ENCODE measurements at regions of chr10 and their contacts with region 1.

Region 1: DNA sequence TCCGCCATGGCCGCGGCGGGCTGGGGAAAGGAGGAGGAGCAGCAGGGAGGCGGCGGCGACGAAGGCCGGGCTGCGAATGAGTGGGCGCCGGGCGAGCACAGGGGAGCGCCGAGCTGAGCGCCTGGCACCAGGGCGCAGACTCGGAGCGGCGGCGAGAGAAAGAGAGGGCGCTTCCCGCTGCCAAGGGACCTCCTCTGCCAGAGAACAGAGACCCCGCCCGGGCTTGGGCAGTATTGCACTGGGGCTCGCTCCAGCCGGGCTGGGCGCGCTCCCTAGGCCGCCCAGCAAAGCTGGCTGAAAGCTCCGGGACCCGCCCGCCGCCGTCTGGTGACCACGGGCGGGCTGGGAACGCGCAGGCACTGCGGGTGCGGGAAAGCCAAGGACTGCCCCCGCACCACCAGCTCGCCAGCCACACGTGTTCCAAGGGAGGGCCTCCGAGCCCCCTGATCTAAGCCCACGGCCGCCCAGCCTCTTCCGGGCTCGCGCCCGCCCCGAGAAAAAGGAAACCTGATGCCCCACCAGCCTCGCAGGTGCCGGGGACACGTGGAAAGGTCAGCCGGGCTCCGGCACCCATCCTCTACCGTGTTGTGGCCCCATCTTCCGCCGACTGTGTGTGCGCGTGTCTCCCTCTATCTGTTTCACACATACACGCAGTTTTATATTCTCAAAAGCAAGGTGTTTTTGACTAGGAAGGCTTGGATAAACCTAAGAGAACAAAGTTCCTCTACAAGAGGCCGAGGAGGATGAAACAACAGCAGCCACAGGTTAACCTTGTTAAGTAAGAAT is at the start of gene CCDC6:
- DNase-seq: peak; percentile 90
- ATAC-seq: peak; percentile 92
- H3K4me3 ChIP-seq: peak within 1 kb of the TSS; percentile 84
- H3K27ac ChIP-seq: peak within 1 kb of the TSS; percentile 66
- H3K4me1 ChIP-seq: peaks cover 3% of the 10 kb centered on the region
- H3K27me3 ChIP-seq: no peaks in the 10 kb centered on the region
- CTCF ChIP-seq: peak; percentile 85
- POLR2A ChIP-seq: peak; percentile 57
- RAD21 ChIP-seq: peak; percentile 60
- total RNA-seq, gene CCDC6: 30.8 and 44.2 TPM in 2 replicates

Region 2: DNA sequence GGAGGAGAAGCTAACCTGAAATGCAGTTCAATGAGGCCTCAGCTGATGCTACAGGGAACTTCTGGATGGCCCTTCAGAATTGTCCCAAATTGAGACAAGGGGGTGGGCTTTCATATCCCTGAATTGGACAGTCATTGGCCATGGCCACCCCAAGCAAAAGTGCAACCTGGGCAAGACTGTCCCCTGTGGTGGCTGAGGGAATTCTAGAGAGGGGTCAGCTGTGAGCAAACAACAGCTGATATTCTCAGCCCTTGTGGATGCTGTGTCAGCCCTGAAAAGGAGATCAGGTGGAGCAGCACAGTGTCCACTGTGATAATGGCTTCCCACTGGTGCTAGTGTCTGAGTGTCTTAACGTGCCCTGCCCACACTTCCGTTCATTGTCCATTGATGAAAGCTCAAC is 273.5 kb before region 1 on chr10:
- CTCF ChIA-PET with region 1: no interaction called
- POLR2A ChIA-PET with region 1: no interaction called
- dilution Hi-C with region 1: no loop called
- in situ Hi-C with region 1: no loop called
- intact Hi-C with region 1: no loop called
- DNase-seq: no peak
- ATAC-seq: no peak
- H3K4me3 ChIP-seq: no peak overlapping the region
- H3K27ac ChIP-seq: no peak overlapping the region
- H3K4me1 ChIP-seq: no peaks in the 10 kb centered on the region
- H3K27me3 ChIP-seq: peaks cover 10% of the 10 kb centered on the region
- CTCF ChIP-seq: no peak
- POLR2A ChIP-seq: no peak
- RAD21 ChIP-seq: no peak

Region 3: GRCh38 chr10:59830601-59831259 is 75.9 kb before region 1 on chr10:
- CTCF ChIA-PET with region 1: interaction called, 6 read pairs
- POLR2A ChIA-PET with region 1: no interaction called
- dilution Hi-C with region 1: no loop called
- in situ Hi-C with region 1: no loop called
- intact Hi-C with region 1: loop called (anchors 2 kb)
- DNase-seq: peak; percentile 56
- ATAC-seq: peak; percentile 82
- H3K4me3 ChIP-seq: no peak overlapping the region
- H3K27ac ChIP-seq: no peak overlapping the region
- H3K4me1 ChIP-seq: no peaks in the 10 kb centered on the region
- H3K27me3 ChIP-seq: no peaks in the 10 kb centered on the region
- CTCF ChIP-seq: peak; percentile 70
- POLR2A ChIP-seq: no peak
- RAD21 ChIP-seq: peak; percentile 60

Region 4: DNA sequence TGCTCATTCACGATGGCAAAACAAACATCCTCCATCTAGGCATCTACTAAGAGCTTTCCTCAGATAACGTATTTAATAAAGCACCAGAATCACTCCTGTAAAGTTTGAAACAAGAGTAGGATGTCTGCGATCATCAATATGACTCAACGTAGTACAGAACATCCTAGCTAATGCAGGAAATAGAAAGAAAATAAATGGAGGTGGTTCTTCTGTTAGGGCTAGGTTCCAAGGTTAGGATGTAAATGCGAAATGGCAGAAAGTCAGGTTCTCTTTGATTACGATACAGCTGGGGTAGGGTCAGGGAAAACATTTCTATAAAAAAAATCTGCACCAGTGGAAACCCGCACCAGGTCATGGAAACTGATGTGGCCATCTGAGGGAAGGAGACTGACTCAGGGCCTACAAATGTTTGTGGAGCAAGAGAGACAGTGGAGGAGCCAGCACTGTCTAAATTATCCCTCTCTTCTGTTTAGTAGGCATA is 29.4 kb before region 1 on chr10:
- CTCF ChIA-PET with region 1: interaction called, 3 read pairs
- POLR2A ChIA-PET with region 1: no interaction called
- dilution Hi-C with region 1: no loop called
- in situ Hi-C with region 1: no loop called
- intact Hi-C with region 1: loop called (anchors 2 kb)
- DNase-seq: peak; percentile 78
- ATAC-seq: peak; percentile 75
- H3K4me3 ChIP-seq: no peak overlapping the region
- H3K27ac ChIP-seq: no peak overlapping the region
- H3K4me1 ChIP-seq: peaks cover 5% of the 10 kb centered on the region
- H3K27me3 ChIP-seq: no peaks in the 10 kb centered on the region
- CTCF ChIP-seq: no peak
- POLR2A ChIP-seq: no peak
- RAD21 ChIP-seq: no peak

Region 5: GRCh38 chr10:60048091-60048501 is 141.5 kb after region 1 on chr10:
- CTCF ChIA-PET with region 1: interaction called, 3 read pairs
- POLR2A ChIA-PET with region 1: no interaction called
- dilution Hi-C with region 1: no loop called
- in situ Hi-C with region 1: no loop called
- intact Hi-C with region 1: loop called (anchors 5 kb)
- DNase-seq: no peak
- ATAC-seq: no peak; the same call in 1 of the 2 replicates
- H3K4me3 ChIP-seq: no peak overlapping the region
- H3K27ac ChIP-seq: no peak overlapping the region
- H3K4me1 ChIP-seq: peaks cover 5% of the 10 kb centered on the region; the same call in 1 of the 2 replicates
- H3K27me3 ChIP-seq: no peaks in the 10 kb centered on the region
- CTCF ChIP-seq: peak; percentile 37; the same call in 1 of the 2 replicates
- POLR2A ChIP-seq: no peak
- RAD21 ChIP-seq: peak; percentile 48

Region 6: DNA sequence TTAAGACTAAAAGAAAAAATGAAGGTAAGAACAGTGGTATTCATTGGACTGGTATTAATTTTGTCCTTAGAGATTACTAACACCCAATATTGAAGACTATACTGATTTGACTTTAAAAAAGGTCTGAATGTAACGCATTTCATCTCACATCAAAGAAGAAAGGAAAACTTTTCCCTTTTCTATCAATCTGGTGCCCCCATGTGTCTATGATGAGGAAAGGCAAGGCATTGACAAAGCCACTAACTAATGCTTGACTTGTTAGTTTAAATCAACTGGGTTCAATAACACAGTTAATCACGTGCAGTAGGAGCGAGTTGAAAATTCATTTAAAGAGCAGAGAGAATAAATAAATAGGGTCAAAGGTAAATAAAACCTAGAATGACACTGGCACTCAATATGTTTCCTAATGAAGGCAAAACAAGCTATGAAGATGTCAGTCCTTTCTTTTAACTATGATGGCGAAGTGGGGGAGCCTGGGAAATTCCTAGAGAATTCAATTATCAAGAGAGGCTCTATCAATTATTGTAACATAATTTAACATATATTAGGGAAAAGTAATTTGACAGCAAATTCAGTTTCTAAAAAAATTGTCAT is 302.2 kb after region 1 on chr10:
- CTCF ChIA-PET with region 1: no interaction called
- POLR2A ChIA-PET with region 1: no interaction called
- dilution Hi-C with region 1: no loop called
- in situ Hi-C with region 1: no loop called
- intact Hi-C with region 1: loop called (anchors 5 kb)
- DNase-seq: peak; percentile 49
- ATAC-seq: peak; percentile 59
- H3K4me3 ChIP-seq: no peak overlapping the region
- H3K27ac ChIP-seq: no peak overlapping the region
- H3K4me1 ChIP-seq: no peaks in the 10 kb centered on the region
- H3K27me3 ChIP-seq: peaks cover 15% of the 10 kb centered on the region
- CTCF ChIP-seq: peak; percentile 83
- POLR2A ChIP-seq: no peak
- RAD21 ChIP-seq: peak; percentile 80

Measured in IMR-90 (cell line).